Dorsolateral prefrontal cortex (tissue), 120 donors: ENCODE measurements at regions of chr20 and their contacts with region 1.

Region 1: DNA sequence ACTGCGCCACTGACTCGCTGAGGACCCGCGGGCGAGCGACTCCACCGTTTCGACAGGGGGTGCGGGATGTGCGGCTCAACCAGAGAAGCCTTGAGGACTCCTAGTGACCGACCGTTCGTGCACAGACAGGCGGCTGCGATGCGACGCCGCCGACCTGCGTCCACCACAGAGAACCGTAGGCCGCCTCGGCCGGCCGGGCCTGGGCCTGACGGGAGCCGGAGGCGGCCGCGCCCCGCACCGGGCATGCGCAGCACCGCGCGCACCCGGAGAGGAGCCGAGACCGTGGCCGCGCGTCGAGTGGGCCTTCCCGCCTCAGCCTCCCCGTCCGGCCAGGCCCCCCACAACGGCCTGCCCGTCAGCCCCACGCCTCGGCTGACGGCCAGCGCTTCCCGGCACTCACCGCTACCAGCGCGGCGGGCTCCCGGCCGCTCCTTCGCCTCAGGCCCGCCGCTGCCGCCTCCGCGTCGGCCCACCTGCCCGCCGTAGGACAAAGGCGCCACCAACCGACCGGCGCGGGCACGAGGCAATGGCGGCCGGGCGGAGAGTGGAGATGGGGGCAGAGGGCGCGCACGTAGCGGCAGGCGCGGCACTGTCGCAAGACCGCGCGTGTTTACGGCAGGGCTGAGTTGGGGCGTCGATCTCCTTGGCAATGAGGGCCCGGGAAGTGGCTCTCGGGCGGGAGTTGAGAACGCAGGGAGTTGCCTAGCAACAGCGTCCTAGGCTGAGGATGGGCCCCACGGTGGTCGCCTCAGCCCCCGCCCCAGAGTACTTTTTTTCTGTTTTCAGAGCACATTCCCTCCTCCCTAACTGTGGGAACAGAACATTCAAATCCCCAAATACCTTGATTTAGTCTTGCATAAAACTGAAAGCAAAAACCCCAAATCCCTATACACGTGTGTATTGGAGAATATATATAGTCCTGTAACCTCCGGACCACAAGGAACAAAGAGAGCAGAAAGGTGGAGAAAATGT is at the start of gene NCOA5:
- DNase-seq: peak; percentile 92 to 98 (median 95)
- H3K4me3 ChIP-seq: peak within 1 kb of the TSS; percentile 63 to 97 (median 88)
- H3K27ac ChIP-seq: peak within 1 kb of the TSS; percentile 75 to 99 (median 98)
- H3K27me3 ChIP-seq: no peaks in the 10 kb centered on the region
- CTCF ChIP-seq: peak in 55 of 56 donors; percentile 7 to 92 (median 58)
- total RNA-seq, gene NCOA5: 13.5 to 36.9 (median 24.1) TPM

Region 2: GRCh38 chr20:45971675-45972499 is 117.8 kb before region 1 on chr20 and contains the start of gene ZNF335:
- intact Hi-C with region 1: loop called (anchors 1 to 2 kb)
- DNase-seq: peak; percentile 88 to 97 (median 94)
- H3K4me3 ChIP-seq: peak within 1 kb of the TSS; percentile 63 to 100 (median 90)
- H3K27ac ChIP-seq: peak within 1 kb of the TSS; percentile 97 to 100 (median 100)
- H3K27me3 ChIP-seq: no peaks in the 10 kb centered on the region
- CTCF ChIP-seq: peak in 53 of 56 donors; percentile 15 to 73 (median 54)
- total RNA-seq, gene ZNF335: 20.9 to 40.0 (median 26.7) TPM

Region 3: GRCh38 chr20:46022411-46023147 is 67.1 kb before region 1 on chr20:
- intact Hi-C with region 1: loop called (anchors 1 to 2 kb)
- DNase-seq: peak in 9 of 10 donors; percentile 54 to 86 (median 73)
- H3K4me3 ChIP-seq: peak overlapping the region; percentile 36 to 80 (median 63)
- H3K27ac ChIP-seq: peak overlapping the region in 5 of 59 donors; percentile 27 to 68 (median 44)
- H3K27me3 ChIP-seq: peaks cover 0 to 50% (median 0%) of the 10 kb centered on the region in 45 donors
- CTCF ChIP-seq: peak; percentile 32 to 86 (median 75)

Region 4: DNA sequence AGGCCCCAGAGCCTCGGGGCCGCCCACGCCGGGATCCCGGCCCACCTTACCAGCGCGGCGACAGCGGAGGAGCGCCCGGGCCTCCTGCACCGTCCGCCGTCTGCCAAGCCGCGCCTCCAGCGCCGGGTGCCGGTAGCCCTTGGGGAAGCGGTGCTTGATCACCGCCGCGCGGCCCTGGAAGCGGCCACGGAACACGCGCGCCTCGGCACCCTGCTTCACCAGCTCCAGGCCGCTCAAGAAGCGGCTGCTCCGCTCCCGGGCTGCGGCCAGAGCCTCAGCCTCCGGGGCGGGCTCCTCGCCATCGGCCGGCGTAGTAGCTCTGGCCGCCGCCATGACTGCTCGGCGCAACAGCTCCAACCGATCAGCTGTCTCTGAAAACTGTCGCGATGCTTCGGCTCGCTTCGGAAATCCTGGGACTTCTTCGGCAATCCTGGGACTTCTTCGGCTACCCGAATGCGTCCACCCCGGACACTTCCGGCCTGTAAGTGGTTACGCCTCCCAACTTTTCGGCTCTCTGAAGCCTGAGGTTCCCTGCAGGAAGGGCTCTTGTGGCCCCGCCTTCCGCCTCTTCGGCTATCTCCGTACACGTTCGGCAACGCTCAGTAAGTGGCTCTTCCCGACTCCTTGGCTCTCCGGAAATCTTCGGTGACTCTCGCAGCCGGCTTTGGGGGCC is 599.5 kb after region 1 on chr20 and contains the start of gene TP53RK:
- intact Hi-C with region 1: loop called in 1 of 2 experiments (anchors 10 kb)
- DNase-seq: peak; percentile 86 to 99 (median 96)
- H3K4me3 ChIP-seq: peak within 1 kb of the TSS; percentile 56 to 97 (median 87)
- H3K27ac ChIP-seq: peak within 1 kb of the TSS; percentile 54 to 98 (median 91)
- H3K27me3 ChIP-seq: no peaks in the 10 kb centered on the region
- CTCF ChIP-seq: peak in 46 of 56 donors; percentile 3 to 57 (median 36)
- total RNA-seq, gene TP53RK: 9.6 to 17.8 (median 13.5) TPM